ENCODE measurements at regions of chr15 and their contacts with region 1.

Region 1: GRCh38 chr15:69141286-69141701 is 19.1 kb upstream of the GLCE start:
- DNase-seq: no peak
- H3K4me3 ChIP-seq: no peak overlapping the region
- H3K27ac ChIP-seq: no peak overlapping the region
- H3K4me1 ChIP-seq: no peaks in the 10 kb centered on the region
- H3K27me3 ChIP-seq: peaks cover 30% of the 10 kb centered on the region
- CTCF ChIP-seq: no peak

Region 2: GRCh38 chr15:69088300-69088965 is 52.9 kb before region 1 on chr15:
- dilution Hi-C with region 1: loop called (anchors 5 kb)
- DNase-seq: no peak
- H3K4me3 ChIP-seq: no peak overlapping the region
- H3K27ac ChIP-seq: no peak overlapping the region
- H3K4me1 ChIP-seq: peaks cover 26% of the 10 kb centered on the region
- H3K27me3 ChIP-seq: peaks cover 7% of the 10 kb centered on the region
- CTCF ChIP-seq: no peak

Measured in keratinocyte (primary cell).